Astrocyte of the cerebellum (primary cell): ENCODE measurements at regions of chr1 and their contacts with region 1.

Region 1: GRCh38 chr1:212463565-212464285 is 31.0 kb downstream of the NENF start:
- DNase-seq: no peak
- H3K4me3 ChIP-seq: no peak overlapping the region
- CTCF ChIP-seq: no peak

Region 2: GRCh38 chr1:212077051-212077450 is 386.7 kb before region 1 on chr1:
- in situ Hi-C with region 1: loop called (anchors 5 kb)
- DNase-seq: no peak
- H3K4me3 ChIP-seq: no peak overlapping the region
- CTCF ChIP-seq: no peak

Region 3: DNA sequence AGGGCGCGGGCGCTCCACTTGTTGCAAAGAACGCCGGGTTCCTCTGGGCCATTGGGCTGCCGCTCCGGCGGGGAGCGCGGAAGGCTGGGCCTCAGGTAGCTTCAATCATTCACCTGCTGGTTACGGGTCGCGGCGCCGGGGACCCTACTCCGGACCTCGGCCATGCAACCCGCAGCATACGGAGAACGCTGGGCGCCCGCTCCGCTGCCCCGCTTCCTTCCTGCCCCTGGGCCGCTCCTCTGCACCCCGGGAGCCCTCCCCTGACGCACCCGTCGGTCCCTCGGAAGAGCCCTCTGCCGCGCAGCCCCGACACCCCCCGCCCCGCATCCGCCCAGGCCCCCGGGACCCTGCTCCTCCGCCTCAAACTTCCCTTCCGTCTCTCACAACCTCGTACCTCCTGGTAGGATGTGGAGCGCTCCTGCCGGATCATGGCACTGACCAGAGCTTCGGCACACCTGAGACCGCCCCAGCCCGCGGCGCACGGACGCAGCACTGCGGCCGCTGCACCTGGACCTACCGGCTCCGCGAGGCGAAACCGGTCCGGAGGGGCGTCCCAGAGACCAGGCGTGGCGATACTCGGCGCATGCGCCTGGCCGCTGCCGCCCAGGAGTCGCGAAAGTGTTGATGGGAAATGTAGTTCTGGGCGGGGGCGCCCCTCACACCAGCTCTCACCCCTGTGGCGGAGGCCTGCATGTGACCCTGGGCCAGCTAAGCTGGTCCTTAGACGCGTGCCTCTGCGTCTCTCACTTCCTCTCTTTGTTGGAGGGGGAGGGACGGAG is 49.2 kb before region 1 on chr1 and contains the start of gene PACC1:
- in situ Hi-C with region 1: no loop called
- DNase-seq: peak; percentile 43
- H3K4me3 ChIP-seq: peak within 1 kb of the TSS; percentile 63
- CTCF ChIP-seq: no peak

Region 4: DNA sequence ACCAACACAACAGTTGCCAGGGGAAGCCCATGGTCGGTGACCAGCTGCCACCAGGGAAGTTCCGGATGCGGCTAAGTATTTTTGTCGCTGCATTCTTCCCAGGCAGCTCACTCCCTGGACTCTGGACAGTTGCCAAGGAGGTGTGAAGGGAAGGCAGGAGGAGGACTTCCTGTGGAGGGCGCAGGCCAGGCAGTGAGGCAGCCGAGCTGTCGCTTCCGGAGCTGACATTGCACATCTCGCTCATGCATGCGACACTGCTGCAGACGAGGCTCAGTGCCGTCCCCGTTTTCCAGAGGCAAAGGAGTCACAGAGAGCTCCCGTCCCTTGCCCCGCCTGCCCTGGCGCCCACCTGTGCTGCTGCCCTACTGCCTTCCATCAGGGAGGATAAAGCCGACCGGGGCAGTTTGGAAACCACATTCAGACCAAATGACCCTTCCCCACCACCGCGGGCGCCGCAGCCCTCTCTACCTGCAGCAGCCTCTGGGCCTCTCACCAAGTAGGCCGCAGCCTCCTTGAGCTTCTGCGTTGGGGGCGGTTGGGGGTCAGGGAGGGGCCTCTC is 50.4 kb after region 1 on chr1:
- in situ Hi-C with region 1: no loop called
- DNase-seq: peak; percentile 47
- H3K4me3 ChIP-seq: no peak overlapping the region
- CTCF ChIP-seq: no peak

Region 5: DNA sequence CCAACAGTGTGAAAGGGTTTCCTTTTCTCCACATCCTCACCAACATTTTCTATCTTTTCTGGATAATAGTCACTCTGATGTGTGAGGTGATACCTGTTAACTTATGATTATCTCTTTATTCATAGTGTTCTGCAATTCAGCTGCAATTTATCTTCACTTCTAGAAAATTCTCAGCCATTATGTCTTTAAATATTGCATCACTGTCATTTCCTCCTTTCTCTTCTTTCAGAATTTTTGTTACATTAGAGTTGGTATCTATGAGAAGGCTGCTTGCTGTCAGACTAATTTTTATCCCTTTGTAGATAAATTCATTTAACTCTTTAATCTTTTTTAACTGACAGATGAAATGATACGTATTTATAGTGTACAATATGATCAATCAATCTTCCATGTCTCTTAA is 114.3 kb after region 1 on chr1:
- in situ Hi-C with region 1: no loop called
- DNase-seq: no peak
- H3K4me3 ChIP-seq: no peak overlapping the region
- CTCF ChIP-seq: no peak